Dendritic cell treated with granulocyte-macrophage colony-stimulating factor and Interleukin-4, amounts not matched to agents 40 ng/mL and 50 ng/mL, for 4 days (primary cell): ENCODE measurements at regions of chr3 and their contacts with region 1.

Region 1: GRCh38 chr3:184017672-184018423 is at the start of gene ABCC5:
- H3K4me3 Mint-ChIP-seq: peak within 1 kb of the TSS; percentile 98
- H3K27ac Mint-ChIP-seq: peak within 1 kb of the TSS; percentile 94
- H3K4me1 Mint-ChIP-seq: peaks cover 45% of the 10 kb centered on the region
- H3K27me3 Mint-ChIP-seq: peaks cover 3% of the 10 kb centered on the region

Region 2: DNA sequence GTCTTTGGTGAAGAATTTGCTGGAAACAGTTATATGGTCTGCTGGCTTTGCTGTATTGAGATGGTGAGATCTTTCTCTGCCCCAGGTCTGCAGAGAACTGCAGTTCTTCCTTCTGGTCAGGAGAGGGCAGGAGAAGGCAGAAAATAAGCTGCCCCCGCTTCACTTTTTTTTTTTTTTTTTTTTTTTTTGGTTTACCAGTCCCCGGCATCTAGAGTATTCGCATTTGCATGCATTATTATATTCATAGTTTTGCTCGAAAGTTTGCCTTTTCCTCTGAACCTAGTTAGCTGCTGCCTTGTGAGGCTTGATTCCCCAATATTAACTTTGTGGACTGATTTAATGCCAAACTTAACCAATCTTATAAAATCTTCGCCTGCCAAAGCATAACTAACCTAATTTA is 122.6 kb before region 1 on chr3:
- intact Hi-C with region 1: loop called (anchors 2 kb)
- H3K4me3 Mint-ChIP-seq: no peak overlapping the region
- H3K27ac Mint-ChIP-seq: no peak overlapping the region
- H3K4me1 Mint-ChIP-seq: peaks cover 6% of the 10 kb centered on the region
- H3K27me3 Mint-ChIP-seq: peaks cover 18% of the 10 kb centered on the region

Region 3: GRCh38 chr3:183904833-183905780 is 112.7 kb before region 1 on chr3:
- intact Hi-C with region 1: loop called (anchors 2 kb)
- H3K4me3 Mint-ChIP-seq: no peak overlapping the region
- H3K27ac Mint-ChIP-seq: no peak overlapping the region
- H3K4me1 Mint-ChIP-seq: no peaks in the 10 kb centered on the region
- H3K27me3 Mint-ChIP-seq: peaks cover 16% of the 10 kb centered on the region

Region 4: GRCh38 chr3:183975981-183976662 is 41.7 kb before region 1 on chr3:
- intact Hi-C with region 1: loop called (anchors 5 kb)
- H3K4me3 Mint-ChIP-seq: no peak overlapping the region
- H3K27ac Mint-ChIP-seq: peak overlapping the region; percentile 76
- H3K4me1 Mint-ChIP-seq: peaks cover 8% of the 10 kb centered on the region
- H3K27me3 Mint-ChIP-seq: no peaks in the 10 kb centered on the region

Region 5: GRCh38 chr3:184005941-184006507 is 11.8 kb before region 1 on chr3:
- intact Hi-C with region 1: loop called (anchors 1 kb)
- H3K4me3 Mint-ChIP-seq: peak overlapping the region; percentile 93
- H3K27ac Mint-ChIP-seq: peak overlapping the region; percentile 97
- H3K4me1 Mint-ChIP-seq: peaks cover 69% of the 10 kb centered on the region
- H3K27me3 Mint-ChIP-seq: no peaks in the 10 kb centered on the region